Heart right ventricle (tissue), 16 donors: ENCODE measurements at regions of chr17 and their contacts with region 1.

Region 1: GRCh38 chr17:82668631-82669099 is 20.4 kb upstream of the WDR45B start:
- DNase-seq: peak; percentile 54 to 72
- ATAC-seq: peak; percentile 79 to 91 (median 88)
- H3K4me3 ChIP-seq: peak overlapping the region in 1 of 10 donors; percentile 7
- H3K27ac ChIP-seq: peak overlapping the region in 8 of 10 donors; percentile 74 to 86 (median 78)
- H3K4me1 ChIP-seq: peaks cover 0 to 28% (median 14%) of the 10 kb centered on the region in 9 donors
- H3K27me3 ChIP-seq: no peaks in the 10 kb centered on the region
- CTCF ChIP-seq: peak; percentile 31 to 69 (median 57)

Region 2: DNA sequence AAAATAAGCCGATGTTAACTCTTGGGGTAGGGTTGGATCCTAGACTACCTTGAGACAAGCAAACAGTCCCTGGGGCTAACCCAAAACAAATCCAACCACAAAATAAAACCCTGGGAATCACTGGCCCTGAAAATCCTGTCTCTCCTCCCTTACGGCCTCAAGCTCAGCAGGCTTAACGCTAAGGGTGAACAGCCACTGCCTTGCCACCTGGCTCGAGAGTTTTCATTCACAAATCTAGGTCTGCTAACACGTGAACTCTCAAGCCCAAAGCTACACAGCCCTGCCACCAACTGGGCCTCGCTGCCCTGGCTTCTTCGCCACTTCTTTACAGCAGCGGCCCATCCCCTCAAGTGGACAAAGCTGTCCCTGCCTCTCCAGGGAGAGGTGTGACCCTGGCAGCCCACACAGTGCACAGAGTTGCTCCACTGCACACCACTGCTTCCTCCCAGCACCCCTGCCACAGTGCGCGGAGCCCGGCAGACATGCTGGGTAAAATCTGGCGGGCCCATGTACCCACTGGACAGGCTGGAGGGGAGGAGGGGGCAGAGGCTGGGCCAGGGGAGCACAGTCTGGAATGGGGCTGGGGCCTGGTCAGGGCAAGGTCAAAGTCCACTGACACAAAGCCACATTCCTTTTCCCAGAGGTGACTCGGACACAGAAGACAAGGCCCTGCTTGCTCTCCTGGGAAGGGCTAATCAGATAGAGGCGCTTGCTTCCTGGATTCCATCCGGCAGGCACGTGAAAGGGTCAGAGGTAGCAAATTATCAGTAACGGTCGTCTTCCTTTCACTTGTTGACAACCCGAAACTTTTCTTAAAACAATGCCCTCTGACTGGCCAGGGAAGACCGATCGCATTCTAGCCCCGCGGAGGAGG is 758.5 kb before region 1 on chr17:
- intact Hi-C with region 1: loop called in 1 of 10 experiments (anchors 5 kb)
- DNase-seq: no peak
- ATAC-seq: peak in 1 of 8 donors; percentile 13
- H3K4me3 ChIP-seq: peak overlapping the region; percentile 37 to 99 (median 76)
- H3K27ac ChIP-seq: peak overlapping the region in 9 of 10 donors; percentile 52 to 84 (median 70)
- H3K4me1 ChIP-seq: peaks cover 10 to 22% (median 17%) of the 10 kb centered on the region in 9 donors
- H3K27me3 ChIP-seq: no peaks in the 10 kb centered on the region
- CTCF ChIP-seq: no peak

Region 3: GRCh38 chr17:82267575-82268379 is 400.9 kb before region 1 on chr17:
- intact Hi-C with region 1: no loop called
- DNase-seq: peak; percentile 91 to 92
- ATAC-seq: peak; percentile 94 to 96 (median 95)
- H3K4me3 ChIP-seq: peak overlapping the region in 8 of 10 donors; percentile 8 to 33 (median 16)
- H3K27ac ChIP-seq: peak overlapping the region; percentile 48 to 94 (median 82)
- H3K4me1 ChIP-seq: peaks cover 27 to 74% (median 68%) of the 10 kb centered on the region in 9 donors
- H3K27me3 ChIP-seq: no peaks in the 10 kb centered on the region
- CTCF ChIP-seq: no peak

Region 4: GRCh38 chr17:82751571-82752370 is 83.1 kb after region 1 on chr17 and contains the start of gene TBCD:
- intact Hi-C with region 1: loop called in 1 of 10 experiments (anchors 10 kb)
- DNase-seq: peak; percentile 89 to 93
- ATAC-seq: peak; percentile 84 to 93 (median 91)
- H3K4me3 ChIP-seq: peak within 1 kb of the TSS; percentile 68 to 97 (median 92)
- H3K27ac ChIP-seq: peak within 1 kb of the TSS; percentile 23 to 91 (median 86)
- H3K4me1 ChIP-seq: peaks cover 3 to 25% (median 13%) of the 10 kb centered on the region in 9 donors
- H3K27me3 ChIP-seq: no peaks in the 10 kb centered on the region
- CTCF ChIP-seq: peak in 1 of 9 donors; percentile 9
- total RNA-seq, gene TBCD: 41.3 to 79.0 (median 49.6) TPM

Region 5: DNA sequence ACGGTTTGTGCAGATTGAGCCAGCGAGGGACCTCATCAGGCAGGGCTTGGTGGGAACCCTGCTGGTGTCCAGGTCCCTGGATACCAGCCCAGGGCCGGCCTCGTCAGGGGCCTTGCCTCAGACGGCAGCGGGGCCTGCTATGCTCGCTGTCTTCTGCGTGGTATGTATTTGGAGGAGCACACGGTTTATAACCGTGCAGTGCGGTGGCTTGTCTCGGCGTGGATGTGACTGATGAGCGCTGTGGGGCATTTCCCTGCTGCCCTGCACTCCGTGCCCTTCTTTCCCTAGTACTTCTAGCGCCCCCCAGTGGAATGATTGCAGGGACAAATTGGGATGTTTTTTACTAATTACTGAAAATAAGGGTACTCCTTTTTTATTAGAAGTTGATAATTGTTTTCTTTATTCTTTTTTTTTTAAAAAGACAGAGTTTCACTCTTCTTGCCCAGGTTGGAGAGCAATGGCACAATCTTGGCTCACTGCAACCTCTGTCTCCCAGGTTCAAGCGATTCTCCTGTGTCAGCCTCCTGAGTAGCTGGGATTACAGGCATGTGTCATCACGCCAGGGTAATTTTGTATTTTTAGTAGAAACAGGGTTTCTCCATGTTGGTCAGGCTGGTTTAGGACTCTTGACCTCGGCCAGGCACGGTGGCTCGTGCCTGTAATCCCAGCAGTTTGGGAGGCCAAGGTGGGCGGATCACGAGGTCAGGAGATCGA is 98.5 kb after region 1 on chr17:
- intact Hi-C with region 1: loop called in 8 of 10 experiments (anchors 2 to 10 kb)
- DNase-seq: peak in 1 of 2 donors; percentile 54
- ATAC-seq: peak in 7 of 8 donors; percentile 38 to 71 (median 56)
- H3K4me3 ChIP-seq: no peak overlapping the region
- H3K27ac ChIP-seq: no peak overlapping the region
- H3K4me1 ChIP-seq: peaks cover 0 to 3% (median 0%) of the 10 kb centered on the region in 9 donors
- H3K27me3 ChIP-seq: no peaks in the 10 kb centered on the region
- CTCF ChIP-seq: peak; percentile 29 to 65 (median 59)

Region 6: DNA sequence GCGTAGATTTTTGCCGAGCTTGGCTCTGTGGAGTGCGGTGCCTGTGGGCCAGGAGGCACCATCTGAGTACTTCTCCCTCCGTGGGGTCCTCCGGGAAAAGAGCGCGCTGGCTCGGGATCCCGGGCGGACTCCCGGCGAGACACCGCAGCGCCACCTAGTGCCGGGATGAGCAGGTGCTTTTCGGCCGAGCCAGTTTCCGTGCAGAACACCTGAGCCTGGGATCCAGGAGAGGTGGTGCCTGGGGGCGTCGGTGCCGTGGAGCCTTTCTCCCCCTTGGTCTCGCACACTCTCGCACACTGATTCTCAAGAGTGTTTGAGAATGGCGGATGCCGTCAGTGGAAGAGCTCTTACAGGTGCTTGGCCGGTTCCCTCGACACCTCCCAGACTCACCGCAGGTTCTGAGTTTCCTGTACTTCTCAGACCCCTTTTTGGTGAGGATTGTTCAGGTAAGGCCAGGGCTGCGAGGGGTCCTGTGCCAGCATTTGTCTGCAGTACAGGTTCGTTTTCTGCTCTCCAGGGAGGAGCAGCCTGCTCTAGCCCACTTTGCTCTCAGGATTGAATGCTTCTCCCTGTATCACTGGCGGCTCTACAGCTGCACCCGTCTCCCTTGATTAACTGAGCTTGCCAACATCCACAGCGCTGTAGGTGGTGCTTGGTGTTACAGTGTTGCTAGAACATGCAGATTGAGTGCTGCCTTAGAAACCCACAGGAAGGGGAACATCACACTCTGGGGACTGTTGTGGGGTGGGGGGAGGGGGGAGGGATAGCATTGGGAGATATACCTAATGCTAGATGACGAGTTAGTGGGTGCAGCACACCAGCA is 106.5 kb after region 1 on chr17:
- intact Hi-C with region 1: loop called in 1 of 10 experiments (anchors 5 kb)
- DNase-seq: peak; percentile 37 to 74
- ATAC-seq: peak; percentile 23 to 69 (median 54)
- H3K4me3 ChIP-seq: peak overlapping the region in 3 of 10 donors; percentile 12 to 29 (median 24)
- H3K27ac ChIP-seq: peak overlapping the region in 1 of 10 donors; percentile 10
- H3K4me1 ChIP-seq: peaks cover 0 to 13% (median 0%) of the 10 kb centered on the region in 9 donors
- H3K27me3 ChIP-seq: no peaks in the 10 kb centered on the region
- CTCF ChIP-seq: peak; percentile 75 to 92 (median 89)

Region 7: DNA sequence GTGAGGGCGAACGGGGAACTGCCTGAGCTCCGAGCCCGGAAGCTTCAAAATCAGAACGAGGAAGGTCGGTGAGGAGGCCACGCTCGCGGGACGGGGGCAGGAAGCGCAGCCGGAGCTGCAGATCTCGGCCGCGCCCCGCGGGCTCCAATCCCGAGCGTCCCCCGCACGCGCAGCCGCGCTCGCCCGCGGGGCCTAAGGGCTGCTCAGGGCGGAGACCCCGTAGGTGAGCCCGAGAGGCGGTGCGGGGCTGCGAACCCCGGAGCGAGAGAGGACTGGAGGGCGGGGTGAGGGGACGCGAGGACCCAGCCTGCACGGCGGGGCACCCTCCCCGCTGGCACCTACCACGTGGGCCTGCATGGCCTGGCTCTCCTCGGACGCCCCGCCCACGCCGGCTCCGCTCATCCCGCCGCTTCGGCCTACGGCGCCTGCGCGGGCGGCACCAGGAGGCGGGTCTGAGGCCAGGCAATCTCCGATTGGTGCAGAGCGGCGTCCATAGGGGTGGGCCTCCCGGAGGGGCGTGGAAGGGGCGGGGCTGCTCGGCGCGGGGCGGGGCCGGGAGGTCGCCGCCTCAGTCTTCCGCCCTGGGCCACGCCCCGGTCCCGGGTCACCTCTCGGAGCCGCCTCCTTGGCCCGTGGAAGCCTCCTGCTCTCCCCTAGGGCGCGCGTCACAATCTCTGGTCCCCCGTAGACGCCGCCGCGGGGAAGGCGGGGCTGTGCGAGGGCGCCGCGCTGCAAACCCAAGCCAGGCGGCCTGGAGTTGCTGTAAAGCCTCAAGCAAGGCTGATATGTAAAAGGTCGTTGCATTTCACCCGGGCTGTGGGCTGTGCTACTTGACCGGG is 382.9 kb after region 1 on chr17:
- intact Hi-C with region 1: no loop called
- DNase-seq: peak; percentile 96 to 98
- ATAC-seq: peak; percentile 97 to 99 (median 98)
- H3K4me3 ChIP-seq: peak overlapping the region; percentile 52 to 98 (median 82)
- H3K27ac ChIP-seq: peak overlapping the region; percentile 70 to 96 (median 86)
- H3K4me1 ChIP-seq: peaks cover 4 to 67% (median 27%) of the 10 kb centered on the region in 9 donors
- H3K27me3 ChIP-seq: no peaks in the 10 kb centered on the region
- CTCF ChIP-seq: peak in 3 of 9 donors; percentile 15 to 22 (median 20)